Psoas muscle (tissue), 8 donors: ENCODE measurements at regions of chr6 and their contacts with region 1.

Region 1: DNA sequence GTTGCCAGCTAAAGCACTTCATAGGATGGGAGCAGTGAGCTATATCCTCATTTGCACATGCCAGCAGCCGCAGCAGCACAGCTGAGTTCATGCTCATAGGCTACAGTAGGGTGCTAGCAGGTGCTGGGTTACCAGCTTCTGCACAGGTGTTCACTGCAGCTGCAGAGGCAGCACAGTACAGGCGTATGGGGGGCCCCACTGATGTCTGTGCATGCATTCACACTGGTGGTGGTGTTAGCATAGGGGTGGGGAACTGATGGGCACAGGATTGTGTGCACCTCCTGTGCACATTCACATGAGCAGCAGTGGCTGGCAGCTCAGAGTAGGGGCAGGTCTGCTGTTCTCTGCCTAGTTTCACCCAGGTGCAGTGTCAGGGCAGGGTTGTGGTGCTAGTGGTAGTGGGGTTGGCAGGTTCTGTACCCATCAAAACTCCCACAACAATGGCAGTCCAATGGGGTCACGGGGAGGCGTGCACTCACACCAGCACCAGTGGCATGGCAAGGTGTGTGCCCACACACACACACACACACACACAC is 58.9 kb upstream of the IRAK1BP1 start:
- DNase-seq: no peak
- ATAC-seq: no peak
- H3K4me3 ChIP-seq: no peak overlapping the region
- H3K27ac ChIP-seq: no peak overlapping the region
- H3K4me1 ChIP-seq: no peaks in the 10 kb centered on the region
- H3K27me3 ChIP-seq: no peaks in the 10 kb centered on the region
- CTCF ChIP-seq: no peak

Region 2: GRCh38 chr6:78824045-78824444 is 15.6 kb after region 1 on chr6:
- intact Hi-C with region 1: loop called in 1 of 2 experiments (anchors 2 kb)
- DNase-seq: no peak
- ATAC-seq: no peak
- H3K4me3 ChIP-seq: no peak overlapping the region
- H3K27ac ChIP-seq: no peak overlapping the region
- H3K4me1 ChIP-seq: no peaks in the 10 kb centered on the region
- H3K27me3 ChIP-seq: no peaks in the 10 kb centered on the region
- CTCF ChIP-seq: no peak